ENCODE measurements at regions of chr6 and their contacts with region 1.

Region 1: GRCh38 chr6:35452186-35453090 is at the start of gene FANCE:
- DNase-seq: peak; percentile 97
- H3K4me3 ChIP-seq: peak within 1 kb of the TSS; percentile 43 to 69 (median 64)
- H3K27ac ChIP-seq: peak within 1 kb of the TSS; percentile 74 to 77 (median 76)
- H3K4me1 ChIP-seq: peaks cover 0 to 23% (median 18%) of the 10 kb centered on the region in 4 donors
- H3K27me3 ChIP-seq: no peaks in the 10 kb centered on the region
- CTCF ChIP-seq: no peak
- EP300 ChIP-seq: no peak
- POLR2A ChIP-seq: peak in 1 of 2 donors; percentile 21
- total RNA-seq, gene FANCE: 3.3 to 3.9 (median 3.7) TPM

Region 2: DNA sequence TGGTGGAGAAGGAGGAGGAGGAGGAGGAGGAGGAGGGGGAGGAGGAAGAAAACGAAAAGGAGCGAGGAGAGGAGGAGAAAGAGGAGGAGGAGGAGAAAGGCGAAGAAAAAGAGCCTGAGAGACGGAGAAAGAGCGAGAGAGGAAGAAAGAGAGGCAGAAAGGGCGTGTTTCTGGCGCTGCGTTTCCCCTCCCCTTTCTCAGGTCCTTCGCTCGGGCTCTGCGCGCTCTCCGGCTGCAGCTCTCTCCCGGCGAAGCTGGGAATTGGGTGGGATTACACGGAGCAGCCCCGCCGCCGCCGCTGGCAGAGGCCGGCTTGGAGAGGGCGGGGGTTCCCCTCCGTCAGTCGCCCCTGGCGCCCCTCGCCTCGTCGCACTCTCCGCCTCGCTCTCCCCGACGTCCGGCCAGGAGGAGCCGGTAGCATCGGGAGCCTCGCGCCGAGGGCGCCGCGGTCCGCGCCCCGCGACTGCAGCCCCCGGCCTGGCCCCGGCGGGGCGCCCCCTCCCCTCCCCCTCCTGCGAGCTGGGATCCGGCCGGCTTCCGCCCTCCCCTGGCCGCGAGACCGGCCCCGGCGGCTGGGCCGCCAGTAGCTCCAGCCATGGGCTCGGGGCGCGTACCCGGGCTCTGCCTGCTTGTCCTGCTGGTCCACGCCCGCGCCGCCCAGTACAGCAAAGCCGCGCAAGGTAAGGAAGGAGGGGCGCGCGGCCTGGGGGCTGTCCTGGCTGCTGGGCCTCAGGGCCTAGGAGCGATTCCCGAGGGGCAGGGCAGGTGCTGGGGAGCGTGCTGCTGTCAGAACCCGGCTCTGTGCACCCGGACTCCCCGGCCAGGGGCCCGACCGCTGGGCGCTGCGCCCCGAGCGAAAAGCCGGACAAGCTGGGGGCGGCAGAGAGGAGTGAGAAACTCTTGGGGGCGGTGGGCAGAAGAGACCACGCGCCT is 238.3 kb before region 1 on chr6 and contains the start of gene SCUBE3:
- intact Hi-C with region 1: no loop called
- DNase-seq: no peak
- H3K4me3 ChIP-seq: peak within 1 kb of the TSS; percentile 35 to 60 (median 54)
- H3K27ac ChIP-seq: peak within 1 kb of the TSS in 3 of 4 donors; percentile 4 to 48 (median 33)
- H3K4me1 ChIP-seq: peaks cover 0 to 30% (median 26%) of the 10 kb centered on the region in 4 donors
- H3K27me3 ChIP-seq: peaks cover 0 to 58% (median 13%) of the 10 kb centered on the region in 3 donors
- CTCF ChIP-seq: no peak
- EP300 ChIP-seq: no peak
- POLR2A ChIP-seq: no peak
- total RNA-seq, gene SCUBE3: 2.1 to 12.7 (median 5.3) TPM

Region 3: DNA sequence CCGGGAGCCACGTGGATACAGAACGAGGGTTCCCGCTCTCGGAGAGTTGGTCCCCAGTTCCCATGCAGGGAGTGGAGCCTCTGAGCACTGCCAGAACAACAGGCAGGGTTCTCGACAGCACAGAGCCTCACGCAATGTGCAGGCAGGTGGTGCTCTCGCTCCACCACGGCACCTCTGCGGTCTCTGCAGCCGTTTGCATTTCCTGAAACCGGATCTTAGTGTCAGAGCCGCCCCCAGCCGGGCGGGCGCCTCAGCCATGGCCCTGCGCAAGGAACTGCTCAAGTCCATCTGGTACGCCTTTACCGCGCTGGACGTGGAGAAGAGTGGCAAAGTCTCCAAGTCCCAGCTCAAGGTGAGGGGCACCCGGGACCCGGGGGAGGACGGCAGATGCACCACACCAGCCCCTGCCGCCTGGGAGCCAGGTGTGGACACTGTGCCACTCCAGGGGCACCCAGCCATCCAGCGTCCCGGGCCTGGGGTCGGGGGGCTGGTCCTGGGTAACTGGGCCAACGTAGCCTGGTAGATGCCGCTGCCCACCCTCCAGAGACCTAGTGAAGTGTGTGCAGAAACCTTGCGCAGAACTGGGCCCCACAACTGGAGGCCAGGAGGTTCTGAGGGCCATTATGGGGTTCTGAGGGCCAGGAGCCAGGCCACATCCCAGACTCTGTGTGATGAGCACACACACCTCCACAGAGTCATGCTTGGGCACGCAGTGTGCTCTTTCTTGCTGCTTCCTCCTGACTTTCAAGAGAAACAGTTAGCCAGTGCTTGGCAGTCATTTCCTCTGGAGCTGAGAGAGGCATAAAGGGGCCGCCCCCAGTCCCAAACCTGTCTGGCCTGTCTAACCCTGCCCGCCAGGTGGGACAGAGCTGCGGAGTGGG is 154.6 kb before region 1 on chr6 and contains the start of gene DEF6:
- intact Hi-C with region 1: loop called (anchors 1 kb)
- DNase-seq: peak; percentile 90
- H3K4me3 ChIP-seq: peak within 1 kb of the TSS in 3 of 4 donors; percentile 24 to 42 (median 41)
- H3K27ac ChIP-seq: peak within 1 kb of the TSS; percentile 39 to 54 (median 48)
- H3K4me1 ChIP-seq: peaks cover 0 to 14% (median 13%) of the 10 kb centered on the region in 4 donors
- H3K27me3 ChIP-seq: no peaks in the 10 kb centered on the region
- CTCF ChIP-seq: peak; percentile 29 to 49 (median 40)
- EP300 ChIP-seq: no peak
- POLR2A ChIP-seq: no peak
- total RNA-seq, gene DEF6: 1.4 to 4.7 (median 3.5) TPM

Region 4: GRCh38 chr6:35415065-35415991 is 37.1 kb before region 1 on chr6:
- intact Hi-C with region 1: loop called (anchors 1 kb)
- DNase-seq: peak; percentile 92
- H3K4me3 ChIP-seq: no peak overlapping the region
- H3K27ac ChIP-seq: peak overlapping the region in 3 of 4 donors; percentile 4 to 58 (median 53)
- H3K4me1 ChIP-seq: peaks cover 0 to 14% (median 11%) of the 10 kb centered on the region in 4 donors
- H3K27me3 ChIP-seq: no peaks in the 10 kb centered on the region
- CTCF ChIP-seq: peak; percentile 58 to 77 (median 62)
- EP300 ChIP-seq: no peak
- POLR2A ChIP-seq: no peak

Region 5: DNA sequence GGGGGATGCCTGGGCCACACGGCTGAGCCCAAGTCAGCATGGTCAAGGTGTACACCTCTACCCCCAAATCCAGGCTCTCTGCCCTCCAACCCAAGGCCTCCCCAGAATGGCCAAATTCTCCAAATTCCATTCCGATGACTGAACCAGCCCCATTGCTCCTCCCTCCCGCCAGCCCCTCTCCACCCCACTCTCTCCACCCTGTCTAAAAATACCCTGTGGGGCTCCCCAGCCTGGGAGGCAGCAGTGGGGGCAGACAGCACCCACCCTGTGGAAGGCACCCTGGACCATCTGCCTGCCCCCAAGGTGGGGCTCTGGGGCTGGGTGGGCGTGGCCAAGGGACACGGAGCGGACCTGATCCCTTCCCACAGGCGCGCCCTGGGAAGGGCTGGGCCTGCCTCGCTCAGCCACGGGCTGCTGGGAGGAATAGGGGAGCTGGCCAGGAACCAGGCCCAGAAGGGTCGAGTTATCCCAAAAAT is 33.0 kb after region 1 on chr6:
- intact Hi-C with region 1: no loop called
- DNase-seq: peak; percentile 76
- H3K4me3 ChIP-seq: peak overlapping the region in 3 of 4 donors; percentile 17 to 34 (median 32)
- H3K27ac ChIP-seq: peak overlapping the region; percentile 100
- H3K4me1 ChIP-seq: peaks cover 0 to 86% (median 69%) of the 10 kb centered on the region in 4 donors
- H3K27me3 ChIP-seq: no peaks in the 10 kb centered on the region
- CTCF ChIP-seq: no peak
- EP300 ChIP-seq: no peak
- POLR2A ChIP-seq: peak in 1 of 2 donors; percentile 32